Activated CD4-positive, alpha-beta memory T cell treated with anti-CD3 and anti-CD28 coated beads for 36 hours (primary cell): ENCODE measurements at regions of chr3 and their contacts with region 1.

Region 1: DNA sequence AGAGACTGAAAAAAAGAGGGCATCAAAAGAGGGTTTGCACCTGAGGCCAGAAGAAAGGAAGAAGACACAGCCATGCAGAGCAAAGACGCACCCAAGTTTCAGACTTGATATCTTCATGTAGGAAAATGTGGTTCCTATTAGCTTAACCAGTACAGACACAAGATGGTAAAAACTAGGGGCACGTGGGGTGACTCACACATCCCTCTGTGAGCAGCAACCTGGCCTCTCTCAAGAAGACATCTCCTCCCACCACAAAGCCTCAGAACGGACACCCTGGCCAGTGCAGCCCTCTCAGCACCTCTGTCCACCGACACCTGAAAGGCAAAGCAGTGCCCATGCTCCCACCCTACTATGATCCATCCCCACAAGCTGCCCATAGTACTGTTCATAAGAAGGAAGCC is 33.3 kb downstream of the GLB1 start:
- DNase-seq: peak; percentile 83
- H3K4me3 Mint-ChIP-seq: peak overlapping the region; percentile 56
- H3K27ac Mint-ChIP-seq: peak overlapping the region; percentile 93
- H3K4me1 Mint-ChIP-seq: peaks cover 79% of the 10 kb centered on the region
- H3K27me3 Mint-ChIP-seq: no peaks in the 10 kb centered on the region

Region 2: GRCh38 chr3:32226870-32227500 is 836.7 kb before region 1 on chr3:
- CTCF ChIA-PET with region 1: no interaction called
- POLR2A ChIA-PET with region 1: no interaction called
- intact Hi-C with region 1: no loop called
- DNase-seq: no peak
- H3K4me3 Mint-ChIP-seq: no peak overlapping the region
- H3K27ac Mint-ChIP-seq: no peak overlapping the region
- H3K4me1 Mint-ChIP-seq: peaks cover 9% of the 10 kb centered on the region
- H3K27me3 Mint-ChIP-seq: peaks cover 1% of the 10 kb centered on the region

Region 3: GRCh38 chr3:32934150-32934742 is 129.4 kb before region 1 on chr3:
- CTCF ChIA-PET with region 1: no interaction called
- POLR2A ChIA-PET with region 1: no interaction called
- intact Hi-C with region 1: no loop called
- DNase-seq: peak; percentile 39
- H3K4me3 Mint-ChIP-seq: no peak overlapping the region
- H3K27ac Mint-ChIP-seq: no peak overlapping the region
- H3K4me1 Mint-ChIP-seq: no peaks in the 10 kb centered on the region
- H3K27me3 Mint-ChIP-seq: peaks cover 2% of the 10 kb centered on the region

Region 4: DNA sequence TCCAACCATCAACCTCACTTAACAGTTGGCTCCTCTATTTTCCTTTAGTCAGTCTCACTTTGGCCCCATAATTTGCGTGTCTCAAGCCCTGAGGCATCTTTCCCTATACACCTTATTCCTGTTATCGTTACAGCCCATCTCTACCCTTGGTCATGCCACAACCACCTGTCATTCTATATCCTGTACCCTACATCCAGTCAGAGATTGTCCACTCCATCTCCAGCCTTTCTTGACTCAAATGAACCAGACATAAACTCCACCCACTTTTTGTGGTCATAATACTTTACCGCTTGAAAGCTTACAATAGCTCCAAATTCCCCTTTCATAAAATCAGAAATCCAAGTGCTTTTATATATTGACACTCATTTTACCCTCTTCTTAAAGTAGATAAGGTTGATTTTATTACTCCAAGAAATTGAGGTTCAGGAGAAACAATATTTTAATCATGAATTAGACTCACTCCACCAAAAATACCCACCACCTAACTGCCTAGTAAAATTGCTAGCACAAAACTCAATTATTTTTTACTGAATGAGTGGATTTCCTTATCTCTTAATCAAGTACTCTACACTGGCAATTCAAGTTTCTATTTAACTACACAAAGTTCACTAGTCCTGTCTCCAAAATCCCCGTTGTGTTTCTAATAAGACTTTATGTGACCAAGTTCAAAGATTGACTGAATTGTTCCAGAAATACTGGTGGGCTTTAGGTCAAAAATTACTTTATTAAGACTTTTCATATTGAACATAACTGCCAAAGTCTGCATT is 103.1 kb before region 1 on chr3:
- CTCF ChIA-PET with region 1: interaction called, 4 read pairs
- POLR2A ChIA-PET with region 1: interaction called, 9 read pairs
- intact Hi-C with region 1: loop called (anchors 1 kb)
- DNase-seq: peak; percentile 54
- H3K4me3 Mint-ChIP-seq: peak overlapping the region; percentile 41
- H3K27ac Mint-ChIP-seq: peak overlapping the region; percentile 97
- H3K4me1 Mint-ChIP-seq: peaks cover 84% of the 10 kb centered on the region
- H3K27me3 Mint-ChIP-seq: no peaks in the 10 kb centered on the region

Region 5: GRCh38 chr3:33006081-33006480 is 57.6 kb before region 1 on chr3:
- CTCF ChIA-PET with region 1: no interaction called
- POLR2A ChIA-PET with region 1: interaction called, 13 read pairs
- intact Hi-C with region 1: no loop called
- DNase-seq: peak; percentile 66
- H3K4me3 Mint-ChIP-seq: no peak overlapping the region
- H3K27ac Mint-ChIP-seq: peak overlapping the region; percentile 86
- H3K4me1 Mint-ChIP-seq: peaks cover 72% of the 10 kb centered on the region
- H3K27me3 Mint-ChIP-seq: no peaks in the 10 kb centered on the region

Region 6: DNA sequence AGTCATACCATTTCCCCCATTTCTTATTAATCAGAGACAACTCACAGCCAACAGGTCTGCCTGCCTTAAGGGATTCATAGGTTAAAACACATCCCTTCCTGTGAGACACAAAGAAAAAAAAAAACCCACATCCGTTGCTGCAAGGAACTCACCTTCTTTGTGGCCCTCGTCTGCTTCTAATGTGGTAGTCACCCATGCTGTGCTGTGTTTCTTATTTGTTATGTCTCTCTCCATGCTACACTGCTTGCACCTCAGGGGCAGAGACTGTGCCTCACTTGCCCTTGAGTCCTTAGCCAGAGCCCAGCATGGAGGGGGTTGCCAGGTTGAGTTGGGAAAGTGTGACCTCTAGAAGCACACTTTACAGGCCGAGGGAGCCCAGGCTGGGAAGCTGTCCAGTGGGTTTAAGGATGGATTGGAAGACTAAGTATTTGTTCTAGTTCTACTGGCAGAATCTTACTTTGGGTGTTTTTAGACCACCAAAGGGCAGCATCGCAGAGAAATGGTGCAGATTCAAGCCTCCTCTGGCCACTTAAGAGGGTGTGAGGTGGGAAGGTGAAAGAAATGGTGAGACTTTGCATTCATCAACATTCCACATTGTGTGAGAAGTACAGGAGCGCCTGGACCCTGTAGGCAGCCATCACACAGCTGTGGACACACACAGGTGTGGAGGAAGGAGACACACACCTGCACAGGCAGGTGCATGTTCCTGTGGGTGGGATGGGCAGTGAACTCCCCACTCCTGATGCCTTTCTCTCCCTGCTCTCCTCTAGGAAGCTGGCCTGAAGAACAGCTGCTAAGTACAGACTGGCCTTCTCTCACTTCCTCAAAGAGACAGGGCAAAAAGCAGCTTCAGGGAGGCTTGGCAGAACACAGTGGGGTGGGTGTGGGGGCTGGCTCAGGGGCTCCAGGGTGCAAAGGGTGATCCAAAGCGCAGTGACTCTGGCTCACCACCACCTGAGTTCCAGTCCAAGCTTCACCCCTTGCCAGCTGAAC is 15.5 kb before region 1 on chr3:
- CTCF ChIA-PET with region 1: interaction called, 22 read pairs
- POLR2A ChIA-PET with region 1: interaction called, 68 read pairs
- intact Hi-C with region 1: loop called (anchors 1 kb)
- DNase-seq: peak; percentile 73
- H3K4me3 Mint-ChIP-seq: peak overlapping the region; percentile 52
- H3K27ac Mint-ChIP-seq: peak overlapping the region; percentile 96
- H3K4me1 Mint-ChIP-seq: peaks cover 79% of the 10 kb centered on the region
- H3K27me3 Mint-ChIP-seq: no peaks in the 10 kb centered on the region

Region 7: DNA sequence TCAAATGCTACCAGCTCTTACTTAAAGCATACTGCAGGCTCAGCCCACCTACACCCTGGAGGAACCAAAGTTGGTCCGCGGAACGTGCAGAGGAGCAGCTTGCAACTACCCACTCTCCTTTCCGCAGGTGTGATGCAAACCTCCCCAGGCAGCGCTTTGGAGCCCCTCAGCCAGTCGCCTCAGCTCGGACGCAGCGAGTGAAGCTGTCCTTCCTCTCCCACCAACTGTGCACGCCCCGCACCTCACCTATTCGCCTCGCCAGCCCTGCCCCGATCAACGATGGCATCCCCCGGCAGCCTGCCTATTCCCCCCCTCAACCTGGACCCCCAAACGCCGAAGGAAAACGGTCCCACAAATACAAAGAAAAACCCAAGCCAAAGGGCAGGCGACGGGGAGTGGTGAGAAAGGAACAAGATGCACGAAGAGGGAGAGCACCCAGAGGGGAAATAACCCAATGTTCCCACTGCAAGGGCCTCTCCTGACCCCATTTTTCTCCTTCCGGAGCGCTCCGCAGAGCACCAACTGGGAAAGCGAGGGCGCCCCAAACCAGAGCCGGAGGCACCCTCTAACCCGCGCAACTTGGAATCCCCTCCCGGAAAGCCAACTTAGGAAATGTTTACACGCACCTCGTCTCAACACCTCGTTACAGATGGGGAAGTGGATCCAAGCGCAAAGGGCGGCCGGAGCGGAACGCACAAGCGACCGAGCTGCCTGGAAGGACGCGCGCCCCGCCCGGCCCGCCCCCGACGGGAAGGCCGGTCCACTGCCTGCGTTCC is 32.6 kb after region 1 on chr3:
- CTCF ChIA-PET with region 1: interaction called, 5 read pairs
- POLR2A ChIA-PET with region 1: interaction called, 4 read pairs
- intact Hi-C with region 1: loop called (anchors 2 kb)
- DNase-seq: peak; percentile 60
- H3K4me3 Mint-ChIP-seq: peak overlapping the region; percentile 97
- H3K27ac Mint-ChIP-seq: peak overlapping the region; percentile 85
- H3K4me1 Mint-ChIP-seq: peaks cover 43% of the 10 kb centered on the region
- H3K27me3 Mint-ChIP-seq: no peaks in the 10 kb centered on the region